ENCODE measurements at regions of chr2 and their contacts with region 1.

Region 1: GRCh38 chr2:60439219-60439974 is 114.1 kb downstream of the BCL11A start:
- DNase-seq: peak; percentile 72
- ATAC-seq: peak; percentile 93
- H3K4me3 Mint-ChIP-seq: peak overlapping the region; percentile 76
- H3K27ac Mint-ChIP-seq: peak overlapping the region; percentile 99
- H3K4me1 Mint-ChIP-seq: peaks cover 83% of the 10 kb centered on the region
- H3K27me3 Mint-ChIP-seq: no peaks in the 10 kb centered on the region
- CTCF ChIP-seq: no peak

Region 2: GRCh38 chr2:59888015-59888414 is 551.4 kb before region 1 on chr2:
- CTCF ChIA-PET with region 1: interaction called, 3 read pairs
- POLR2A ChIA-PET with region 1: no interaction called
- intact Hi-C with region 1: loop called (anchors 10 kb)
- DNase-seq: no peak
- ATAC-seq: peak; percentile 95
- H3K4me3 Mint-ChIP-seq: peak overlapping the region; percentile 39
- H3K27ac Mint-ChIP-seq: peak overlapping the region; percentile 81
- H3K4me1 Mint-ChIP-seq: peaks cover 39% of the 10 kb centered on the region
- H3K27me3 Mint-ChIP-seq: no peaks in the 10 kb centered on the region
- CTCF ChIP-seq: no peak

Region 3: GRCh38 chr2:60366135-60366712 is 73.2 kb before region 1 on chr2:
- CTCF ChIA-PET with region 1: interaction called, 5 read pairs
- POLR2A ChIA-PET with region 1: interaction called, 19 read pairs
- intact Hi-C with region 1: no loop called
- DNase-seq: no peak
- ATAC-seq: peak; percentile 60
- H3K4me3 Mint-ChIP-seq: peak overlapping the region; percentile 62
- H3K27ac Mint-ChIP-seq: peak overlapping the region; percentile 95
- H3K4me1 Mint-ChIP-seq: peaks cover 99% of the 10 kb centered on the region
- H3K27me3 Mint-ChIP-seq: no peaks in the 10 kb centered on the region
- CTCF ChIP-seq: no peak

Region 4: DNA sequence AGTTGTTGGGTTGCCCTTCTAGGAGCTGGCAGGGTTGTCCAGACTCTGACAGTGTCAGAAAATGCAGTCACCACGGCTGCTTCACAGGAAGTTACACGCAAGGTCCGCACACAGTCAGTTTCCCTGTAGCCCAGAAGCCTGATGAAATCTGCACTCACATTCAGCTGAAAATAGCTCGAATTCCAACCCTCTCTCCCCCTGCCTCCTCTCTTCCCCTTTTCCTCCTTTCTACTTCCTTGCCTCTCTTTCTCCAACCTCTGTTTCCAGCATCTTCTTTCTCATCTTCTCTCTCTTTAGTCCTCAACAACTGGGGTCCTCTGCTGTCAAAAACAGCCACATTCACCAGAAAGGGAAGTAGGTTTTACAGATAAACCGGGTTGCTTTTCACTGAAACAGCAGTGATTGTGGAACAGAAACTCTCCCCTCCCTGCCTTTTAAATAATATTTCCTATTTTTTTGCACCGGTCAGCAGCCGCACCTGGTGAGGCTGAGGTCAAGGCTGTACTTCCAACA is 44.8 kb after region 1 on chr2:
- CTCF ChIA-PET with region 1: interaction called, 9 read pairs
- POLR2A ChIA-PET with region 1: interaction called, 14 read pairs
- intact Hi-C with region 1: no loop called
- DNase-seq: no peak
- ATAC-seq: peak; percentile 66
- H3K4me3 Mint-ChIP-seq: peak overlapping the region; percentile 78
- H3K27ac Mint-ChIP-seq: peak overlapping the region; percentile 93
- H3K4me1 Mint-ChIP-seq: peaks cover 96% of the 10 kb centered on the region
- H3K27me3 Mint-ChIP-seq: no peaks in the 10 kb centered on the region
- CTCF ChIP-seq: no peak

Region 5: GRCh38 chr2:60504049-60504448 is 64.7 kb after region 1 on chr2:
- CTCF ChIA-PET with region 1: interaction called, 5 read pairs
- POLR2A ChIA-PET with region 1: interaction called, 11 read pairs
- intact Hi-C with region 1: no loop called
- DNase-seq: no peak
- ATAC-seq: peak; percentile 43
- H3K4me3 Mint-ChIP-seq: peak overlapping the region; percentile 58
- H3K27ac Mint-ChIP-seq: peak overlapping the region; percentile 90
- H3K4me1 Mint-ChIP-seq: peaks cover 98% of the 10 kb centered on the region
- H3K27me3 Mint-ChIP-seq: no peaks in the 10 kb centered on the region
- CTCF ChIP-seq: no peak

Region 6: GRCh38 chr2:60544062-60544461 is 104.7 kb after region 1 on chr2:
- CTCF ChIA-PET with region 1: interaction called, 26 read pairs
- POLR2A ChIA-PET with region 1: interaction called, 128 read pairs
- intact Hi-C with region 1: no loop called
- DNase-seq: no peak
- ATAC-seq: peak; percentile 40
- H3K4me3 Mint-ChIP-seq: peak overlapping the region; percentile 96
- H3K27ac Mint-ChIP-seq: peak overlapping the region; percentile 98
- H3K4me1 Mint-ChIP-seq: peaks cover 89% of the 10 kb centered on the region
- H3K27me3 Mint-ChIP-seq: no peaks in the 10 kb centered on the region
- CTCF ChIP-seq: no peak

Measured in activated B cell treated with CpG ODN at 0.5 μM for 24 hours (primary cell).